Psoas muscle (tissue), 8 donors: ENCODE measurements at regions of chr11 and their contacts with region 1.

Region 1: GRCh38 chr11:33857933-33858371 is 33.9 kb downstream of the LMO2 start:
- DNase-seq: peak; percentile 75 to 87
- ATAC-seq: peak; percentile 83 to 98 (median 90)
- H3K4me3 ChIP-seq: no peak overlapping the region
- H3K27ac ChIP-seq: no peak overlapping the region
- H3K4me1 ChIP-seq: no peaks in the 10 kb centered on the region
- H3K27me3 ChIP-seq: no peaks in the 10 kb centered on the region
- CTCF ChIP-seq: peak; percentile 95

Region 2: GRCh38 chr11:33753304-33753967 is 104.5 kb before region 1 on chr11:
- intact Hi-C with region 1: no loop called
- DNase-seq: peak in 1 of 2 donors; percentile 54
- ATAC-seq: peak; percentile 96 to 98 (median 97)
- H3K4me3 ChIP-seq: peak overlapping the region; percentile 53
- H3K27ac ChIP-seq: peak overlapping the region; percentile 80
- H3K4me1 ChIP-seq: peaks cover 26% of the 10 kb centered on the region
- H3K27me3 ChIP-seq: no peaks in the 10 kb centered on the region
- CTCF ChIP-seq: no peak

Region 3: GRCh38 chr11:33970984-33971466 is 113.1 kb after region 1 on chr11:
- intact Hi-C with region 1: loop called (anchors 1 to 2 kb)
- DNase-seq: peak; percentile 29 to 58
- ATAC-seq: peak; percentile 79 to 94 (median 87)
- H3K4me3 ChIP-seq: no peak overlapping the region
- H3K27ac ChIP-seq: no peak overlapping the region
- H3K4me1 ChIP-seq: no peaks in the 10 kb centered on the region
- H3K27me3 ChIP-seq: no peaks in the 10 kb centered on the region
- CTCF ChIP-seq: peak; percentile 71

Region 4: GRCh38 chr11:33987975-33988580 is 130.1 kb after region 1 on chr11:
- intact Hi-C with region 1: loop called in 1 of 2 experiments (anchors 5 kb)
- DNase-seq: peak; percentile 53 to 71
- ATAC-seq: peak; percentile 74 to 87 (median 85)
- H3K4me3 ChIP-seq: no peak overlapping the region
- H3K27ac ChIP-seq: no peak overlapping the region
- H3K4me1 ChIP-seq: no peaks in the 10 kb centered on the region
- H3K27me3 ChIP-seq: no peaks in the 10 kb centered on the region
- CTCF ChIP-seq: peak; percentile 77

Region 5: DNA sequence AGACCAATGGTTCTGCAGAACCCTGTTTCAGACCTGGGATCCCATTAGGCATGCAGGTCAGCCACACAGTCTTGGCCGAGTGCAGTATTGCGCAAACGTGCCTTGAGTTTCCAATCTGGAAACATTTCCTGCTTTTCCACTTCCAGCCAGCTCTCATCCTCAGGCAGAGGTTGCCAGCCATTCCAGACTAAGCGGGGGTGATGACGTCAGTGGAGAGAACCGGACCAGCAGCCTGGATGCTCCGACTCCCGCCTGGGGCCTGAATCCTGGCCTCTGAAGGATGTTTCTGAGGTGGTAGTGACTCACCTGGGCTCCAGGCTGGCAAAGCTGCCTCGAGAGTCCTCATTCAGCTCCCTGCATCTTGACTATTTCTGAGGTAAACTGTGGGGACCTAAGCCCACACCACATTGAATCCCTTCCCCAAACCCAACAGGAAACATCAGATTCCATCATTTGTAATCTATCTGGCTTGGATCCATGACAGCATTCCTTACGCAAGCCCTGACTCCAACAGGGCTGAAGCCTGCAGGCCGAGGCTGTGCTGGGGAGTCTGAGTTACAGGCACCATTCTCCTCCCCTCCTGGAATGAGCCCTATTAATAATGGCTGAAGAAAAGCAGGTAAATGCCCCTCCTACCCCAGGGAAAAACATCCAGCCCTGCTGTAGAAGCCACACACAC is 416.9 kb after region 1 on chr11:
- intact Hi-C with region 1: no loop called
- DNase-seq: peak; percentile 87 to 91
- ATAC-seq: peak; percentile 87 to 92 (median 90)
- H3K4me3 ChIP-seq: no peak overlapping the region
- H3K27ac ChIP-seq: peak overlapping the region; percentile 71
- H3K4me1 ChIP-seq: peaks cover 27% of the 10 kb centered on the region
- H3K27me3 ChIP-seq: no peaks in the 10 kb centered on the region
- CTCF ChIP-seq: no peak

Region 6: GRCh38 chr11:34339149-34340064 is 481.5 kb after region 1 on chr11:
- intact Hi-C with region 1: no loop called
- DNase-seq: no peak
- ATAC-seq: no peak
- H3K4me3 ChIP-seq: no peak overlapping the region
- H3K27ac ChIP-seq: no peak overlapping the region
- H3K4me1 ChIP-seq: peaks cover 34% of the 10 kb centered on the region
- H3K27me3 ChIP-seq: no peaks in the 10 kb centered on the region
- CTCF ChIP-seq: no peak